ENCODE measurements at regions of chr3 and their contacts with region 1.

Region 1: DNA sequence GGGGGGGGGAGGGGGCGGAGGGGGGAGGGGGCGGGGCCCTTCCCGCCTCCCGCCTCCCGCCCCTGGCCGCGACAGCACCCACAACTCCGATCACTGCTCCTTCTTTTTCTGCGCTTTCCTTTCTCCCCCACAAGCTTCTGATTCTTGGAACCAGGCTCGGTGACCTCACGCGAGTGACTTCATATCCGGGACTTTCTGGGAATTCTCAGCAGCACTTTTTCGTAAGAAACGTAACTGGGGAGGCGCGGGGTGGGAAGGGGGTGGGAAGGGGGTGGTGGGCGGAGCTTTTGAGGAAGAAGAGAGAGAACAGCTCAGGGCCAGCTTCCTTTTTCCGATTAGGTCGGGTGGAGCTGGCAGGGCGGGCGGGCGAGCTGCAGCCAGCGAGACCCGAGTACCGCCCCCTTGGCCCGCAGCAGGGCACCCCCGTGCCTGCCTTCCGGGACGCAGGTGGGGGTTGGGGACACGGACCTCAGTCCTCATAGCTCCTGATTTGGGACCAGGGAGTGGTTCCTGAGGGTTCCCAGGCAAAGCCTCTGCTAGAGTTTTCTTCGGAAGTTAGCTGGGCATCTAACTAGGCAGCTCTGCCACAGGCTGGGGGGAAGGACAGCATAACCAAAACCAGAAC is 14.6 kb downstream of the XIRP1 start:
- DNase-seq: peak; percentile 95
- H3K4me3 ChIP-seq: peak overlapping the region in 2 of 3 experiments; percentile 41 to 55
- H3K27ac ChIP-seq: peak overlapping the region; percentile 96
- H3K4me1 ChIP-seq: peaks cover 25% of the 10 kb centered on the region
- H3K27me3 ChIP-seq: no peaks in the 10 kb centered on the region
- CTCF ChIP-seq: no peak
- POLR2A ChIP-seq: peak; percentile 37

Region 2: GRCh38 chr3:38829404-38829803 is 348.4 kb before region 1 on chr3:
- CTCF ChIA-PET with region 1: no interaction called
- POLR2A ChIA-PET with region 1: no interaction called
- dilution Hi-C with region 1: no loop called
- intact Hi-C with region 1: no loop called
- DNase-seq: peak; percentile 73
- H3K4me3 ChIP-seq: no peak overlapping the region
- H3K27ac ChIP-seq: peak overlapping the region; percentile 77
- H3K4me1 ChIP-seq: peaks cover 27% of the 10 kb centered on the region
- H3K27me3 ChIP-seq: no peaks in the 10 kb centered on the region
- CTCF ChIP-seq: no peak
- POLR2A ChIP-seq: no peak

Region 3: GRCh38 chr3:39051647-39052561 is 125.9 kb before region 1 on chr3 and contains the starts of genes SCN11A and WDR48:
- CTCF ChIA-PET with region 1: no interaction called
- POLR2A ChIA-PET with region 1: no interaction called
- dilution Hi-C with region 1: no loop called
- intact Hi-C with region 1: loop called (anchors 5 kb)
- DNase-seq: peak; percentile 92
- H3K4me3 ChIP-seq: peak within 1 kb of the TSS; percentile 54 to 96 (median 80)
- H3K27ac ChIP-seq: peak within 1 kb of the TSS; percentile 58
- H3K4me1 ChIP-seq: peaks cover 6% of the 10 kb centered on the region
- H3K27me3 ChIP-seq: peaks cover 4% of the 10 kb centered on the region in 2 experiments
- CTCF ChIP-seq: no peak
- POLR2A ChIP-seq: peak; percentile 81
- total RNA-seq, gene SCN11A: 0.07 TPM in 1 of 2 replicates, not detected in the other
- total RNA-seq, gene WDR48: 25.3 and 31.2 TPM in 2 replicates

Region 4: DNA sequence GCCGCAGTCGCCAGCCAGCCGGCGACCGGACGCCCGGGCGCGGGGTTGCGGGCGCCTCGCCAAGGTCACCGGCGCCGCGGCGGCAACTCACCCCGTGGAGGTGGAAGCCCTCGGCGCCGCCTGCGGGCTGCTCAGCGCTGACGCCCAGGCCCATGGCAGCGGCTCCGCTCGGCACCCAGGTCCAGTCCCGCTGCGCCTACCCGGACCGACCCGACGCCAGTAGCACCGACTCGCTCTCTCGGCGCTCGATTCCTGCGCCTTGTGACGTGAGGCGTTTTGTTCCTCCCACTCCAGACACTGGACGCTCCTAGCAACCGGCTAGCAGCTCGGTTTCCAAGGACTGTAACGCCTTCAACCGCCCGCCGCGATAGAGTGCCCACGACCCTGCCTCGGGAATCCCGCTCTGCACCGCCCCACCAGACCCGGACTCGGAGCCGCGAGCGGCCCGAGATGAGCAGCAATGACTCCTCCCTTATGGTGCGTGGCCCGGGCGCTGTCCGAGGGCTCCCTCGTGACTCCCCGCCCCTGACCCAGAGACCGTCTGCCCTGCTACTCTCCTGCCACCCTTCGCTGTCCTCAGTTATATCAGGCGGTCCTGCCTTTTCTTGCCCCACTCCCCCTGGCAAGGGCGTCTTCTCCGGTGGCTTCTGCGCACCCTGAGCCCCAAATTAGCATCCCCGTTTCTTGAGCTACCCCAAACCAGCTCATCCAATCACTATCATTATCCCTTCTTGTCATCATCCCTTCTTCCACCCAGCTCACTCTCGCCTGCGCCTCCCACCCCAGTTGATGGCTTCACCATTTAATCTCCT is 70.2 kb before region 1 on chr3 and contains the starts of genes GORASP1 and TTC21A:
- CTCF ChIA-PET with region 1: no interaction called
- POLR2A ChIA-PET with region 1: interaction called, 5 read pairs
- dilution Hi-C with region 1: no loop called
- intact Hi-C with region 1: loop called (anchors 1 kb)
- DNase-seq: peak; percentile 86
- H3K4me3 ChIP-seq: peak within 1 kb of the TSS; percentile 69 to 84 (median 78)
- H3K27ac ChIP-seq: peak within 1 kb of the TSS; percentile 75
- H3K4me1 ChIP-seq: peaks cover 18% of the 10 kb centered on the region
- H3K27me3 ChIP-seq: no peaks in the 10 kb centered on the region
- CTCF ChIP-seq: no peak
- POLR2A ChIP-seq: peak; percentile 67
- total RNA-seq, gene GORASP1: 68.0 and 74.7 TPM in 2 replicates
- total RNA-seq, gene TTC21A: 6.3 and 7.8 TPM in 2 replicates

Region 5: DNA sequence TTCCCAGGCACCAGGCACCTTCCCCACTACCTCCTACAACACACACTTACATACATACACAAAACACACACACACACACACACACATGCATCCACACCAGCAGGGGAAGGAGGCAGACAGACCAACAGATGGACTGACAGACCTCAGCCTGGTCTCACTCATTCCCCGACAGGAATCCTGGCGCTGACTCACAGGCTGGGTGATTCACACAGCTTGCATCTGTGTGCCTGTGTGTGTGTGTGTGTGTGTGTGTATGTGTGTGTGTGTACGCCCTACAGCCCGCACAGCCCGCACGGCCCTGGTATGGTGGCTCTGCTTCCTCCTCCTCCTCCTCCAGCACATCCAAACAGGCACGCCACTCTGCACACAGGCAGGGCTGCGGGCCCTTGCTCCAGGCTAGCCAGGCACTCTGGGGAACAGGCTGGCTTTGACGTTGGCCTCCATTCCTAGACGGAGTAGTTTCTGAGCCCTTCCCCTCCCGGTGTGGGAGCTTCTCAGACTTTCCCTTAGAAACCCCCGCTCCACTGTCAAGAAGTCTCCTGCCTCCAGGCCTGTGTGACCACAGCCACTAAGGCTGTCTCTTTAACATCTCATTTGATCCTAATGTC is 30.7 kb before region 1 on chr3:
- CTCF ChIA-PET with region 1: interaction called, 11 read pairs
- POLR2A ChIA-PET with region 1: interaction called, 19 read pairs
- dilution Hi-C with region 1: no loop called
- intact Hi-C with region 1: loop called (anchors 1 kb)
- DNase-seq: peak; percentile 95
- H3K4me3 ChIP-seq: peak overlapping the region in 1 of 3 experiments; percentile 33
- H3K27ac ChIP-seq: peak overlapping the region; percentile 97
- H3K4me1 ChIP-seq: peaks cover 65% of the 10 kb centered on the region
- H3K27me3 ChIP-seq: no peaks in the 10 kb centered on the region
- CTCF ChIP-seq: no peak
- POLR2A ChIP-seq: peak; percentile 40

Region 6: DNA sequence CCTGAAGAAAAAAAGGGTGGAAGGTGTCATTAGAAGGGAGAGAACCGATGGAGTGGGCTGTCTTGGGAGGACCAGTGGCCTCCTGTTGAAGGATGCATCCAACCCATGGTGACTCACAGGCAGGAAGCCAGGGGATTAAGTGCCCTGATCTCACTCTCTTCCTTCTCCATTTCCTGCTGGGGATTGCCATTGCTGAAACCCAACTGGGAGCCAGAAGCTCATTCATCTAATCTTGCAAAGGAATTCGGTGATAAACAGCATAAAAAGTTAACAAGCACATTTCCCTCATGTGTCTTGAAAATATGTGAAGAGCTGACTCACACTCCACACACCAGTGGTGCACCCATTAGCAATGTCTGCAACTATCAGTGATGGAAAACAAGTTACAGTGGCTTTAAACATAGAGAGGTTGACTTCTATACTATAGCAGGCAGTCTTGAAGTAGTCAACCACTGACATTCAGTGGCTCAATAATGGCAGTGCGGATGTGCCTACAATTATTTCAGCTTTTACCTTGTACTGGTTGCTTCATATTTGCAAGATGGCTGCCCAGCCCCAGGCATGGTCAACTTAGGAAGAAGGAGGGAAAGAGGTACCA is 11.6 kb before region 1 on chr3:
- CTCF ChIA-PET with region 1: interaction called, 4 read pairs
- POLR2A ChIA-PET with region 1: interaction called, 6 read pairs
- dilution Hi-C with region 1: no loop called
- intact Hi-C with region 1: loop called (anchors 1 kb)
- DNase-seq: peak; percentile 94
- H3K4me3 ChIP-seq: no peak overlapping the region
- H3K27ac ChIP-seq: peak overlapping the region; percentile 79
- H3K4me1 ChIP-seq: peaks cover 29% of the 10 kb centered on the region
- H3K27me3 ChIP-seq: no peaks in the 10 kb centered on the region
- CTCF ChIP-seq: no peak
- POLR2A ChIP-seq: peak; percentile 37

Region 7: DNA sequence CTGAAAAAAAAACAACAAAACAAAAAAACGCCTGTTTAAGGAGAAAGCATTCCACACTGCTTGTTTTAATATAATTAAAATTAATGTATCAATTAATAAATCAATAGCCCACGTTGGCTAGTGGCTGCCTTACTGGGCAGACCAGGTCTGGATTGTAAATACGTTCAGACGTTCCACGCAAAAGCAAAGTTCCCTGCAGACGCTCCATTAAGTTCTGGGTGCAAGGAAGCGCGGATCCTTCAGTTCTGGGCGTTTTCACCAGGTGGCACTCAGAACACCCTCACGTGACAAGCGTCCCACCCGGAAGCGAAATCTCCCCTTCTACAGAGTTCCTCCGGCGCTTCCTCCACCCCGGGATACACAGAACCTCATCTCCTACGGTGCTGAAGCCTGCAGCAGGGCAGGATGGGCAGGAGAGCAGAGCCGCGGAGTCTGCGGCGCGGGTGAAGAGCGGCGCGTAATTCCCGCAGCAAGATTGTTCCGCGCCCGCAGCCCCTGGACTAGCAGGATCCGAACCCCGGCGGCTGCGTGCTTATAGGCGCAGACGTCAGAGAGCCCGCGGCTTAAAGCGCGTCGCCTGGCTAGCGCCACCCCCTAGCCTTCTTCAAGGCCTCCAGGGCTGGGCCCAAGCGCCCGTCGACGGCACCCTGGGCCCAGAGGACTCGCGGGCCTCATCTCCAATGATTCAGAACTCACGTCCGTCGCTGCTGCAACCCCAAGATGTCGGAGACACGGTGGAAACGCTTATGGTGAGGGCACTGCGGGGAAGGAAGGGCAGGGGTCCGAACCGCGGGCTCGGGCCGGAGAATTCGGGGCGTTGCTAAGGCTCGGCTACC is 205.4 kb after region 1 on chr3 and contains the start of gene SLC25A38:
- CTCF ChIA-PET with region 1: no interaction called
- POLR2A ChIA-PET with region 1: no interaction called
- dilution Hi-C with region 1: no loop called
- intact Hi-C with region 1: loop called (anchors 1 kb)
- DNase-seq: peak; percentile 86
- H3K4me3 ChIP-seq: peak within 1 kb of the TSS; percentile 58 to 79 (median 70)
- H3K27ac ChIP-seq: peak within 1 kb of the TSS; percentile 54
- H3K4me1 ChIP-seq: peaks cover 8% of the 10 kb centered on the region
- H3K27me3 ChIP-seq: no peaks in the 10 kb centered on the region
- CTCF ChIP-seq: peak in 1 of 2 donors; percentile 24
- POLR2A ChIP-seq: peak; percentile 71
- total RNA-seq, gene SLC25A38: 16.0 and 20.0 TPM in 2 replicates

Measured in endothelial cell of umbilical vein (primary cell).